ENCODE measurements at regions of chr6 and their contacts with region 1.

Region 1: DNA sequence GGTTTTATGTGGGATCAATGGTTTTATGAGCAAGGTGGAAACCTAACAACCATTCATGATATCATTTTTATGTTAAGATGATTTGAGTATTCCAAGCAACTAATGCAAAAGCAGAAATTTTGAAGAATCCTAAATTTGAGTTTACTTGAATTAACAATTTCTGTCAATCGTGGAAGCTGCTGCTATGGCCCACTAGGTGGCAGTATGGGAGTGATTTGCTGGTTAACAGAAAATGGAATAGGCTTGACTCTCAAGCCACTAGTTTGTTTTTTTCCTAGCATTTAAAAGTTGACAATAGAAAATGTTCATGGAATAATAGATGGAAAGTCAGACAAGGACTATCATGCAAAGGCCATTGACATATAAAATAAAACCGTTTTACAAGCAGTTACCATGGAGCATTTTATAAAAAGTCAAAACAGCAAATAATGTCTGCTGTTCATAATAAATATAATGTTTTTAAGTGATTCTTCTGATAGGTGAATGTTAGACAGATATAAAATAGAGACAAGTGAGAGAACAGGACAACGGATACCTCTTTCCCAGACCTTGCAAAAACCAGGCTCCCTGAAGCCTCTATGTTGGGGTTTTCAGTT is 43.0 kb upstream of the TMEM200A start:
- DNase-seq: no peak
- H3K4me3 ChIP-seq: no peak overlapping the region
- H3K27ac ChIP-seq: no peak overlapping the region
- H3K4me1 ChIP-seq: no peaks in the 10 kb centered on the region
- H3K27me3 ChIP-seq: no peaks in the 10 kb centered on the region
- CTCF ChIP-seq: peak; percentile 68 to 85 (median 70)
- EP300 ChIP-seq: no peak
- POLR2A ChIP-seq: no peak

Region 2: GRCh38 chr6:130500693-130501092 is 177.9 kb after region 1 on chr6:
- intact Hi-C with region 1: no loop called
- DNase-seq: no peak
- H3K4me3 ChIP-seq: no peak overlapping the region
- H3K27ac ChIP-seq: no peak overlapping the region
- H3K4me1 ChIP-seq: no peaks in the 10 kb centered on the region
- H3K27me3 ChIP-seq: no peaks in the 10 kb centered on the region
- CTCF ChIP-seq: no peak
- EP300 ChIP-seq: no peak
- POLR2A ChIP-seq: no peak

Region 3: GRCh38 chr6:130843575-130844320 is 521.0 kb after region 1 on chr6:
- intact Hi-C with region 1: loop called (anchors 5 kb)
- DNase-seq: no peak
- H3K4me3 ChIP-seq: no peak overlapping the region
- H3K27ac ChIP-seq: no peak overlapping the region
- H3K4me1 ChIP-seq: peaks cover 0 to 12% (median 5%) of the 10 kb centered on the region in 4 donors
- H3K27me3 ChIP-seq: no peaks in the 10 kb centered on the region
- CTCF ChIP-seq: peak; percentile 36 to 50 (median 48)
- EP300 ChIP-seq: no peak
- POLR2A ChIP-seq: no peak

Region 4: GRCh38 chr6:130872250-130873095 is 549.7 kb after region 1 on chr6:
- intact Hi-C with region 1: loop called (anchors 10 kb)
- DNase-seq: no peak
- H3K4me3 ChIP-seq: no peak overlapping the region
- H3K27ac ChIP-seq: no peak overlapping the region
- H3K4me1 ChIP-seq: no peaks in the 10 kb centered on the region
- H3K27me3 ChIP-seq: no peaks in the 10 kb centered on the region
- CTCF ChIP-seq: peak; percentile 53 to 81 (median 74)
- EP300 ChIP-seq: no peak
- POLR2A ChIP-seq: no peak

Measured in esophagus muscularis mucosa (tissue), 4 donors.